Psoas muscle (tissue), 8 donors: ENCODE measurements at regions of chr9 and their contacts with region 1.

Region 1: DNA sequence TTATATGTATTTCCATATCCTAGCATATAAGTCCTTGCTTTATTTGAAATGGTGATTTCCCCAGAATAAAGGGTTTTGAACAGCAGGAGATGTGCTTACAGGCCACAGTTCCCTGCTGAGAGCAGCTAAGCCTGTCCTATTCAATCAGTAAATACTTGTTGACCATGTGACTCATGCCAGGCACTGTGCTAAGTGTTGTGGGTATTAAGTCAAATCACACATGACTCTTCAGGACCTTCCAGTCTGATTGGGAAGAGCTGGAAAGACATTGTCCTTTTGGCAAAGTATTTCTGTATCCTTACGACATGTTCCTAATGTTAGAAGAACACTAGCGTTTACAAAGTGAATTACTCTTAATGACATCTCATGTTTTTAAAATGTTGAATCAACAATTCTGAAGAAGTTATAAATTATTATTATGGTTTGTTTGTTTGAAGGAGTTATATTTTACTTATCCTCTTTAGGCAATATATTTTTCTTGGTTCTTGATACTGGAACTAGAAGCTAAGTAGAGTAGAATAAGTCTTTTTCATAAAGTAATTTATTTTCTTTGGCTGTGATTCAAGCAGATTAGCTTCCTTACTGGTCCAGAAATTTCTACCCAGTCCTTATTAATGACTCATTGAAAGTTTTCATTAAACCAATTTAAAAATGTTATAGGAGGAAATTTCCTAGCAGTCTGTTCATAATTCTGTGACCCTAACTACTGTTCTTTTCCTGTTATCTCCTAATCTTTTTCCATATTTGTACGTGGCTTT is 82.1 kb downstream of the GAPVD1 start:
- DNase-seq: no peak
- ATAC-seq: peak in 3 of 4 donors; percentile 80 to 85 (median 81)
- H3K4me3 ChIP-seq: no peak overlapping the region
- H3K27ac ChIP-seq: no peak overlapping the region
- H3K4me1 ChIP-seq: no peaks in the 10 kb centered on the region
- H3K27me3 ChIP-seq: no peaks in the 10 kb centered on the region
- CTCF ChIP-seq: no peak

Region 2: GRCh38 chr9:125296833-125297372 is 46.8 kb before region 1 on chr9:
- intact Hi-C with region 1: loop called (anchors 10 kb)
- DNase-seq: no peak
- ATAC-seq: no peak
- H3K4me3 ChIP-seq: no peak overlapping the region
- H3K27ac ChIP-seq: no peak overlapping the region
- H3K4me1 ChIP-seq: peaks cover 6% of the 10 kb centered on the region
- H3K27me3 ChIP-seq: no peaks in the 10 kb centered on the region
- CTCF ChIP-seq: no peak